Activated CD4-positive, alpha-beta T cell treated with anti-CD3 and anti-CD28 coated beads for 36 hours (primary cell): ENCODE measurements at regions of chr20 and their contacts with region 1.

Region 1: DNA sequence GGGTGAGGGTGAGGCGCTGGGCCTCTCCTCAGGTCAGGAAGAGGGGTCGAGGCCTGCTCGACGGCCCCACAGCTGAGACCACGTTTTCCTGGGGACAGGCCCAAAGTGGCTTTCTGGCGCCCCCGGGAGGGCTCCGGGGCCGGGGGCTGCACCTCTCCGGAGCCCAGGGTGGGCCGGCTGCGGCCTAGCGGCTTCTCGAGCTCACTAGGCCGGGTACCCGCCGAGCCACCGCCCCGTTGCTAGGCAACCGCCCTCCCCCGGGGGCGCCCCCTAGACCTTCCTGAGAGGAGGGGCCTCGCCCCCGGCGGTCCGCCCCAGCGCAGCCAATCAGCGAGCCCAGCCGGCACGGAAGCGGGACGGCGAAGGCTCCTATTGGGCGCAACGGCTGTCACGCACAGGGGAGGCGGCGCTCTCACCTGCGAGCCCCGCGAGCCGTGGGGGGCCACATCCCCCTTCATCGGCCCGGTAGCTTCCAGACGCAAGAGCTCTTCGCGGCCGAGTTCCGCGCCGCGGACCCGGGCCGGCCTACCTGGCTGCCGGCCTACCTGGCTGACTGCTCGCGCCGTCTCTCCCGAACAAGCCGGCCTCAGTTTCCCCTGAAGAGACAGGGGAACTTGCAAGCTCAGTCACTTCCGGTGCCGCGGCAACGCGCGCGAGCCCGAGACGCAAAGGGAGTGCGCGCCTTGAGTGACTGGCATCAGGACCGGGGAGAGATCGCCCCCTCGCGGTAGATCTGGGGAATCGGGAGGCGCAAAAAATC is 831 bp upstream of the BCL2L1 start:
- DNase-seq: peak; percentile 99
- ATAC-seq: peak; percentile 88
- H3K4me3 Mint-ChIP-seq: peak overlapping the region; percentile 97
- H3K27ac Mint-ChIP-seq: peak overlapping the region; percentile 90
- H3K4me1 Mint-ChIP-seq: peaks cover 7% of the 10 kb centered on the region
- H3K27me3 Mint-ChIP-seq: no peaks in the 10 kb centered on the region

Region 2: DNA sequence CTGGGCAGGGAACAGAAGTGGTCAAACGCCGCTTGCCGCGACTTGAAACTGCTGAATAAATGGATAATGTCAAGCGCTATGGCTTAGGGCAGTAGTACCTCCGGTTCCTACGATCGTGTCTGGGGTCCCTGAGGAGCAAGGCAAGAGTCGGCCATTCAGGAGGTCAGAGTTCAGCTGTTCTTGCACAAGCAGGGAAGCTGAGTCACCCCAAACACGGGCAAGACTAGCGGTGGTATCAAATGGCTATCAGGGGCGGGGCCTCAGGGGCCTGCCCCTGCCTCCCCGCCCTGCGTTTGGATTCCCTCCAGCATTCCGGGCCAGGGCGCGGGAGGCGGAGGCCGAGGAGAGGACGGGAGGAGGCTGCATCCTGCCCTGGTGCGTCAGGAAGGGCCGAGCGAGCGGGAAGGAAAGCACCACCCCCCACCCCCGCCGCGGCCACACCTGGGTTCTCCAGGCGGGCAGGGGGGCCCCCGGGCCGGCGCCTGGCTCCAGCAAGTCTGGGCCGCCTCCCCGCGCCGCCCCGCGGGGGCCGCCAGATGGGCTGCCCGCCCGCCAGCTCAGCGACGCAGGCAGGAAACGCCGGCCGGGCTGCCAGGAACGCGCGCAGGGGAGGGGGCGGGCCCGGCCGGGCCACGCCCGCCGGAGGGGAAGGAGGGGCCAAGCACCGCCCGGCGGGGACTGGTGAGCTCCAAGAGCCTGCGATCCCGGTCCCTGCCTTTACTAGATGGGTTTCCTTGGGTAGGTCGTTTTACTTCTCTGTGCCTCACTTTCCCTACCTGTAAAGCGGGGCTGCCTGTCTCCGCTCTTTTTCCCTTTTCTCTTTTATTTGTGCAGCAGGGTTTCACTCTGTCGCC is 150.6 kb before region 1 on chr20:
- CTCF ChIA-PET with region 1: interaction called, 6 read pairs
- POLR2A ChIA-PET with region 1: no interaction called
- intact Hi-C with region 1: loop called (anchors 1 to 2 kb)
- DNase-seq: peak; percentile 94
- ATAC-seq: peak; percentile 85
- H3K4me3 Mint-ChIP-seq: peak overlapping the region; percentile 88
- H3K27ac Mint-ChIP-seq: peak overlapping the region; percentile 89
- H3K4me1 Mint-ChIP-seq: peaks cover 25% of the 10 kb centered on the region
- H3K27me3 Mint-ChIP-seq: no peaks in the 10 kb centered on the region

Region 3: DNA sequence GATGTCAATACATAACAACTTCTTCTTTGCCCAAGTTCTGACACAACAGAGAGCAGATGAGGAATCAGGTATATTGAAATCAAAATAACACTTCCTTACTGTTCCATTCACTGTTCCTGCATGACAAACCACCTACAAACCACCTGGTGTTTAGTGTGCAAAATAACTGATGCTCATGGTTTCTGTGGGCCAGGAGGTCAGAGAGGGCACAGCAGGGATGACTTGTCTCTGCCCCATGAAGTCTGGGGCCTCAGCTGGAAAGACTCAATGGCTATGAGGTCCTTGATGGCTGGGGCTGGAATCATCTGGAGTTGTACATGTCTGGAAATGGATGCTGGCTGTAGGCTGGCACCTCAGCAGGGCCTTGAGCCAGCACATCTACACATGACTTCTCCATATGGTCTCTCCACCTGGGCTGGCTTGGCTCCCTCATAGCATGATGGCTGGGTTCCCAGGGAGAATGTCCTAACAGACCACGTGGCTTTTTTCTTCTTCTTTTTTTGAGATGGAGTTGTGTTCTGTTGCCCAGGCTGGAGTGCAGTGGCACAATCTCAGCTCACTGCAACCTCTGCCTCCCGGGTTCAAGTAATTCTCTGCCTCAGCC is 93.2 kb before region 1 on chr20:
- CTCF ChIA-PET with region 1: interaction called, 37 read pairs
- POLR2A ChIA-PET with region 1: interaction called, 4 read pairs
- intact Hi-C with region 1: loop called (anchors 1 kb)
- DNase-seq: no peak
- ATAC-seq: peak; percentile 49
- H3K4me3 Mint-ChIP-seq: no peak overlapping the region
- H3K27ac Mint-ChIP-seq: no peak overlapping the region
- H3K4me1 Mint-ChIP-seq: no peaks in the 10 kb centered on the region
- H3K27me3 Mint-ChIP-seq: no peaks in the 10 kb centered on the region

Region 4: GRCh38 chr20:31674895-31675827 is 48.3 kb before region 1 on chr20:
- CTCF ChIA-PET with region 1: interaction called, 56 read pairs
- POLR2A ChIA-PET with region 1: interaction called, 10 read pairs
- intact Hi-C with region 1: loop called (anchors 1 kb)
- DNase-seq: peak; percentile 81
- ATAC-seq: peak; percentile 72
- H3K4me3 Mint-ChIP-seq: peak overlapping the region; percentile 91
- H3K27ac Mint-ChIP-seq: peak overlapping the region; percentile 100
- H3K4me1 Mint-ChIP-seq: peaks cover 79% of the 10 kb centered on the region
- H3K27me3 Mint-ChIP-seq: no peaks in the 10 kb centered on the region

Region 5: GRCh38 chr20:31698803-31699718 is 24.4 kb before region 1 on chr20:
- CTCF ChIA-PET with region 1: interaction called, 10 read pairs
- POLR2A ChIA-PET with region 1: no interaction called
- intact Hi-C with region 1: loop called (anchors 1 kb)
- DNase-seq: peak; percentile 46
- ATAC-seq: peak; percentile 93
- H3K4me3 Mint-ChIP-seq: peak overlapping the region; percentile 26
- H3K27ac Mint-ChIP-seq: peak overlapping the region; percentile 89
- H3K4me1 Mint-ChIP-seq: peaks cover 68% of the 10 kb centered on the region
- H3K27me3 Mint-ChIP-seq: no peaks in the 10 kb centered on the region

Region 6: GRCh38 chr20:32357869-32358631 is 634.6 kb after region 1 on chr20 and contains the start of gene ASXL1:
- CTCF ChIA-PET with region 1: no interaction called
- POLR2A ChIA-PET with region 1: no interaction called
- intact Hi-C with region 1: loop called in 1 of 2 experiments (anchors 5 kb)
- DNase-seq: peak; percentile 98
- ATAC-seq: peak; percentile 82
- H3K4me3 Mint-ChIP-seq: peak within 1 kb of the TSS; percentile 99
- H3K27ac Mint-ChIP-seq: peak within 1 kb of the TSS; percentile 100
- H3K4me1 Mint-ChIP-seq: peaks cover 68% of the 10 kb centered on the region
- H3K27me3 Mint-ChIP-seq: no peaks in the 10 kb centered on the region
- total RNA-seq, gene ASXL1: 129 to 141 TPM